ENCODE measurements at regions of chr6 and their contacts with region 1.

Region 1: DNA sequence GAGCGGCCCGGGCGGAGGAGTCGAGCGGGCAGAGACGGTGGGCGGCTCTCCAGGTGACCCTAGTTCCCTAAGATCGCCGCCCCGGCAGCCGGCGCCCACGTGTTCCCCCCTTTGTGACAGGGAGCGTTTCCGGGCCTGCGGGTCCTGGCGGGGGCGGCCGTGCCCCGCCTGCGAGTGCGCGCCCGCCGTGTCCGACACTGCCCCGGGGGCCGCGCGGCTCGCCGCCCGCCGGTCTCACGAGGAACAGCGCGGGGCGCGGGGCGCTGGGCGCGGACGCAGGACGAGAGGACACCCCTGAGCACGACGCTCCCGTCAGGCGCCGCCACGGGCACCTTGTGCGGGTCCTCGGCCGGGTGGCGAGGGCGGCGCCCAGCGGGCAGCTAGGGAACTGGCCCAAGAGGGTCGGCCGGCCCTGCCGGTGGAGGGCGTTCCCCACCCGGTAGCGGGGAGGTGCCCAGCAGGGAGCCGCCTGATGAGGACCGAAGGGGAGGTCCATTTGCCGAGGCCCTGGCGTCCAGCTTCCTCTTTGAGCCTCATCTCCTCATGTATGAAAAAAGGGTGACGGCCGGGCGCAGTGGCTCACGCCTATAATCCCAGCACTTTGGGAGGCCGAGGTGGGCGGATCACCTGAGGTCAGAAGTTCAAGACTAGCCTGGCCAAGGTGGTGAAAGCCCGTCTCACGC is at the start of gene VARS1:
- H3K4me3 ChIP-seq: peak within 1 kb of the TSS; percentile 81
- H3K27ac ChIP-seq: peak within 1 kb of the TSS; percentile 93
- H3K4me1 ChIP-seq: no peaks in the 10 kb centered on the region; the same call in 1 of the 2 replicates
- CTCF ChIP-seq: peak; percentile 100

Region 2: DNA sequence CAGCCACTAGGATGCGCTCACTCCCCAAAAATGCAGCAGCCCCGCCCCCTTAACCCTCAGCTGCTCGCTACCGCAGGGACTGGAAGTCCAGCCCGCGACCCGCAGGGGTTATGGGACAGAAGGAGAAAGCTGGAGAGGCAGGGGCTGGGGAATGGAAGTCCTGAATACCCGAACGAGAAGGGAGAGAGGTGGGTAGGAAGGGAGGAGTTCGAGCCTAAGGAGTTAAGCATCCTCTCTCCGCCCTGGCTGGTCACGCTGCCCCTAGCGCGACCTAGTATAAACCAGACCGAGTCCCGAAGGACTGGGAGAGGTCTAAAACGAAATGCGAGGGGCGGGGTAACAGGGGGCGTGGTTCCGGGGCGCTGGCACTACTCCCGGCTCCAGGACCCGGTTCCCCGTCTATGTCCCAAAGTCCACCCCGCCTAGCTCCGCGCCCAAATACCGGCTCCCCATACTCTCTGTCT is 66.2 kb before region 1 on chr6:
- CTCF ChIA-PET with region 1: interaction called, 11 read pairs
- POLR2A ChIA-PET with region 1: interaction called, 10 read pairs
- H3K4me3 ChIP-seq: peak overlapping the region; percentile 74
- H3K27ac ChIP-seq: peak overlapping the region; percentile 67; the same call in 1 of the 2 replicates
- H3K4me1 ChIP-seq: peaks cover 3% of the 10 kb centered on the region
- CTCF ChIP-seq: peak; percentile 94

Region 3: DNA sequence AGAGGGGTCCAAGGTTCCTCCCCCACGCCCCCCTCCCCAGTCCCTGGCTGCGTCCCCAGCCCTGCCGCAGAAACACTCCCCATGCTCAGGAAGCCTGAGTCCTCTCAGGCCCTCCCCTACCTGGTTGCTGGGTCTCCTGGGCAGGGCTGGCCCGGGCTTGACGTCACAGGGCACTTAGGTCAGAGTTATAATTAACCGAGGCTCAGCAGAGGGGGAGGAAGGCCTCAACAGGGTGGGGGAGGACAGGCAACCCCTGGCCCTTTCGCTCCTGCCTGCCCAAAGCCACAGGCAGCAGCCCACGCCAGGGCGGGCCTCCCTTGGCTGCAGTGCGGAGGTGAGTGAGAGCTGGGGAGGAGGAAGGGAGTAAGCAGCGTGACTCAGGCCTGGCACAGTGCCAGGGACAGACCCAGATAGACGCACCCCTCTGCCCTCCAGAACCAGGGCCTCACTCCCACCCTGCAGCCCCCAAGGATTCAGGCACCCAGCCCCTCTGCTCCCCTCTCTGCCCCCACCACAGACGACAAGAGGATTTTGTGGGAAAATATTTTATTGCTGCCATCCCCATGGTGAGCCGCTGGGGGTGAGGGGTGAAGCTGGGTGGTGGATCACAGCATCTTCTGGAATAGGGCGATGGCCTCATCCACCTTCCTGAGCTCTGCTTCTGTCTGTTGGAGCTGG is 18.6 kb before region 1 on chr6 and contains the start of gene VWA7:
- CTCF ChIA-PET with region 1: interaction called, 28 read pairs
- POLR2A ChIA-PET with region 1: interaction called, 15 read pairs
- H3K4me3 ChIP-seq: peak within 1 kb of the TSS; percentile 21
- H3K27ac ChIP-seq: no peak within 1 kb of the TSS
- H3K4me1 ChIP-seq: peaks cover 4% of the 10 kb centered on the region
- CTCF ChIP-seq: no peak

Region 4: DNA sequence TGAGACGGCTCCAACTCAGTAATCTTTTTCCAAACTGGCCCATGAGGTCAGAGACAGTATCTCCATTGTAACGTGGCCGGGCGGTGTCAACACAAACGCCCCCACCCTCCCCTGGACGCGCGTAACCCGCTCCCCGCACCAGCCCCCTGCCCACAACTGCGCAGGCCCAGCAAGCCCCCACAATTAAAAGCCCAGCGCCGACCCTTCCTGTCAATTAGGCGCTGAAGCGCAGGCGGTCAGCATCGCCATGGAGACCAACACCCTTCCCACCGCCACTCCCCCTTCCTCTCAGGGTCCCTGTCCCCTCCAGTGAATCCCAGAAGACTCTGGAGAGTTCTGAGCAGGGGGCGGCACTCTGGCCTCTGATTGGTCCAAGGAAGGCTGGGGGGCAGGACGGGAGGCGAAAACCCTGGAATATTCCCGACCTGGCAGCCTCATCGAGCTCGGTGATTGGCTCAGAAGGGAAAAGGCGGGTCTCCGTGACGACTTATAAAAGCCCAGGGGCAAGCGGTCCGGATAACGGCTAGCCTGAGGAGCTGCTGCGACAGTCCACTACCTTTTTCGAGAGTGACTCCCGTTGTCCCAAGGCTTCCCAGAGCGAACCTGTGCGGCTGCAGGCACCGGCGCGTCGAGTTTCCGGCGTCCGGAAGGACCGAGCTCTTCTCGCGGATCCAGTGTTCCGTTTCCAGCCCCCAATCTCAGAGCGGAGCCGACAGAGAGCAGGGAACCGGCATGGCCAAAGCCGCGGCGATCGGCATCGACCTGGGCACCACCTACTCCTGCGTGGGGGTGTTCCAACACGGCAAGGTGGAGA is 19.5 kb after region 1 on chr6 and contains the starts of genes HSPA1A and HSPA1L:
- CTCF ChIA-PET with region 1: interaction called, 13 read pairs
- POLR2A ChIA-PET with region 1: interaction called, 17 read pairs
- H3K4me3 ChIP-seq: peak within 1 kb of the TSS; percentile 46
- H3K27ac ChIP-seq: peak within 1 kb of the TSS; percentile 80
- H3K4me1 ChIP-seq: peaks cover 4% of the 10 kb centered on the region; the same call in 1 of the 2 replicates
- CTCF ChIP-seq: no peak